ENCODE measurements at regions of chr17 and their contacts with region 1.

Region 1: GRCh38 chr17:55822028-55822427 is 71.2 kb downstream of the PCTP start:
- DNase-seq: no peak
- H3K4me3 ChIP-seq: no peak overlapping the region
- H3K27ac ChIP-seq: no peak overlapping the region
- H3K4me1 ChIP-seq: no peaks in the 10 kb centered on the region
- H3K27me3 ChIP-seq: no peaks in the 10 kb centered on the region
- CTCF ChIP-seq: no peak
- POLR2A ChIP-seq: no peak

Region 2: GRCh38 chr17:55889271-55889670 is 67.2 kb after region 1 on chr17:
- intact Hi-C with region 1: loop called (anchors 2 kb)
- DNase-seq: no peak
- H3K4me3 ChIP-seq: no peak overlapping the region
- H3K27ac ChIP-seq: no peak overlapping the region
- H3K4me1 ChIP-seq: no peaks in the 10 kb centered on the region
- H3K27me3 ChIP-seq: no peaks in the 10 kb centered on the region
- CTCF ChIP-seq: no peak
- POLR2A ChIP-seq: no peak

Region 3: DNA sequence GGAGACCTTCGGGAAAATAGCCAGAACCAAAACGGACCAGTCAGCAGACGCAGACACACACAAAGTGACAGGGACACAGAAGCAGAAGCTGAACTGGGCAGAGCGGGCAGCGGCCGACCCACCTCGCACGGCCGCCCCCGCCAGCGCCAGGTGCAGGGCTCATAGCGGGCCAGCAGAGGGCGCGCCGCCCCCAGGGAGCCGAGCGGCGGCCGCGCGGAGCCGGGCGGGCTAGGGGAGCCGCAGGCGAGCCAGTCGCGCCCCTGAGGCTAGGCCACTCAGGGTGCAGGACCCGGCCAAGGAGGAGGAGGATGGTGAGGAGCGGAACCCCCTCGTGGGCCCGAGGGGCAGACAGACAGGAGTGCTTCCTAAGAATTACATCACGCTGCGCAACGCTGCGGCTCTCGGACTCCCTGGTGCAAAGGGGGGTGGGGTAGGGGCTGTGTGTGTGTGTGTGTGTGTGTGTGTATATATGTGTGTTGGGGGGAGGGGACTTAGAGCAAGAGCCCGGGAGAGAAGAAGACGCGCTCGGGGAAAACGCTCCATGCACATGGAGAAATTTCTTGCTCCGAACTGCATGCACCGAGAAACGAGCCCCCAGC is 770.6 kb after region 1 on chr17:
- intact Hi-C with region 1: no loop called
- DNase-seq: no peak
- H3K4me3 ChIP-seq: peak overlapping the region; percentile 56 to 70
- H3K27ac ChIP-seq: peak overlapping the region; percentile 83
- H3K4me1 ChIP-seq: peaks cover 35% of the 10 kb centered on the region
- H3K27me3 ChIP-seq: no peaks in the 10 kb centered on the region
- CTCF ChIP-seq: peak; percentile 58 to 97 (median 66)
- POLR2A ChIP-seq: no peak

Region 4: GRCh38 chr17:56690486-56691291 is 868.7 kb after region 1 on chr17:
- intact Hi-C with region 1: no loop called
- DNase-seq: no peak
- H3K4me3 ChIP-seq: no peak overlapping the region
- H3K27ac ChIP-seq: no peak overlapping the region
- H3K4me1 ChIP-seq: no peaks in the 10 kb centered on the region
- H3K27me3 ChIP-seq: no peaks in the 10 kb centered on the region
- CTCF ChIP-seq: no peak
- POLR2A ChIP-seq: no peak

Measured in vagina (tissue), 2 donors.